ENCODE measurements at regions of chr12 and their contacts with region 1.

Region 1: GRCh38 chr12:118372541-118373495 is at the start of gene TAOK3:
- DNase-seq: peak; percentile 95
- H3K4me3 Mint-ChIP-seq: peak within 1 kb of the TSS; percentile 89
- H3K27ac Mint-ChIP-seq: peak within 1 kb of the TSS; percentile 89
- H3K4me1 Mint-ChIP-seq: peaks cover 44% of the 10 kb centered on the region
- H3K27me3 Mint-ChIP-seq: peaks cover 15% of the 10 kb centered on the region
- total RNA-seq, gene TAOK3: 52.4 and 57.0 TPM in 2 replicates

Region 2: GRCh38 chr12:118016424-118017264 is 356.2 kb before region 1 on chr12 and contains the start of gene RFC5:
- intact Hi-C with region 1: loop called (anchors 2 kb)
- DNase-seq: peak; percentile 95
- H3K4me3 Mint-ChIP-seq: peak within 1 kb of the TSS; percentile 88
- H3K27ac Mint-ChIP-seq: peak within 1 kb of the TSS; percentile 88
- H3K4me1 Mint-ChIP-seq: peaks cover 16% of the 10 kb centered on the region
- H3K27me3 Mint-ChIP-seq: peaks cover 2% of the 10 kb centered on the region
- total RNA-seq, gene RFC5: 61.9 and 65.8 TPM in 2 replicates

Region 3: DNA sequence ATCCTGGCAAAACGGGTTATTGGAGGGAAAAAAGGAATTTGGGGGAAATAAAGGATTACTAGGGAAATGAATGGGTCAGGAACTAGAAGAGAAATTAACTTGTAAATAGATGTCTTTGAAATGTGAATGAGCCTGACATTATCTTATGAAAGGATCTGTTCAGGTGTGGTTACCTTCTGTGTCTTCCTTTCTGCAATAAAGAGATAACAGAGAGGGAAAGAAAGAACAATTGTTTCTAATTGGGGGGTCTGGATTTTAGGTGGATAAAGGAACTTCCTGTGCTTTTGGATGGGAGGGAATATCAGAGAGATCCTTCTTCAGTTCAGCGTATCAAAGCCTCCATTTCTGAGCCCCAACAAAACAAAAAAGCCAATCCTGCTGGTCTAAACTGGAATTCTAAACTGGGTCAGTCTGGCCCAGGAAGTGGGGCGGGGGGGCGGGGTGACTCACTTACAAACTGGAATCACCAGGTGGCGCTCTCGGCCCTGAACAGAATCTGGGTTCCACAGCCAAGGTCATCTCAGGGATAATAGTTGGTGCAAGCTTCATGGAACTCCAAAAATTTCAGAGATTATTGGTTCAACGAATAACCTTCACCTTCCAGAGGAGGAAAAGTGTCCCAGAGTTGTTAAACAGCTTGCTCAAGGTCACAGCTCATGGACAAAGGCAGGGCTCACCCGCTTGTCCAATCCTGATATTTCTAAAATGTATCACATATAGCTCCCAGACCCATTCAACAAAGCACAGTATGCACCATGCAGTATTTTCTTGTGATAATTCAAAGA is 252.0 kb before region 1 on chr12:
- intact Hi-C with region 1: loop called (anchors 1 kb)
- DNase-seq: peak; percentile 36
- H3K4me3 Mint-ChIP-seq: no peak overlapping the region
- H3K27ac Mint-ChIP-seq: peak overlapping the region; percentile 21
- H3K4me1 Mint-ChIP-seq: peaks cover 8% of the 10 kb centered on the region
- H3K27me3 Mint-ChIP-seq: no peaks in the 10 kb centered on the region

Region 4: DNA sequence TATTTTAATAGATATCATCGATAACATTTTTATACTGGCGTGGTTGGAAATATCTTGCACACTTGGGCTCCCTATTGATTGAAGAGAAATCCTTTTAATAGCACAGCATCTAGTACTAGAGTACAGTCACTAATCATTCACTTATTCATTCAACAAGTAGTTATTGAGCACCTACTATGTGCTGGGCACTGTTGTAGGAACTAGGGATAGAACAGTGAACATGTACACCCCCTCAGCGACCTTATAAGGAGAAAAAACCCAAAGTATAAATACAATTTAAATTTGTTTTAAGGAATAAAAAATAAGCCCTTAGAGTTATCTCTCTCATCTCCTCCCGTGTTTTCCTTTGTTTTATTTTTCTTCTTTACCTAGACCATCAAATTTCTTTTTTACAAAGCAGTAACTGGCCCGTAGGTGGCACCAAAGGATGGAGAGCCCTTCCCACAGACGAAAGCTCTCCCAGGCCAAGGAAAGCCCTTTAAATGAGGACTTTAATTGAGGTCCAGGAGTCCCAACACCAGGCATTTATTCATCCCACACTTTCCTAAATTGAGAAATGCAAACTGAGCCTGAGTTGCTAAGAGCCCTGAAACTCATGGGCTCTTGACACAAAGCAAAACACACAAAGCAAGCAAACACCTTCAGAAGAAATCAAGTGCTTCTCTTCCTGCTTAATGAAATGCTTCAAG is 207.9 kb before region 1 on chr12:
- intact Hi-C with region 1: loop called (anchors 1 kb)
- DNase-seq: no peak
- H3K4me3 Mint-ChIP-seq: no peak overlapping the region
- H3K27ac Mint-ChIP-seq: peak overlapping the region; percentile 65
- H3K4me1 Mint-ChIP-seq: peaks cover 21% of the 10 kb centered on the region
- H3K27me3 Mint-ChIP-seq: no peaks in the 10 kb centered on the region

Region 5: DNA sequence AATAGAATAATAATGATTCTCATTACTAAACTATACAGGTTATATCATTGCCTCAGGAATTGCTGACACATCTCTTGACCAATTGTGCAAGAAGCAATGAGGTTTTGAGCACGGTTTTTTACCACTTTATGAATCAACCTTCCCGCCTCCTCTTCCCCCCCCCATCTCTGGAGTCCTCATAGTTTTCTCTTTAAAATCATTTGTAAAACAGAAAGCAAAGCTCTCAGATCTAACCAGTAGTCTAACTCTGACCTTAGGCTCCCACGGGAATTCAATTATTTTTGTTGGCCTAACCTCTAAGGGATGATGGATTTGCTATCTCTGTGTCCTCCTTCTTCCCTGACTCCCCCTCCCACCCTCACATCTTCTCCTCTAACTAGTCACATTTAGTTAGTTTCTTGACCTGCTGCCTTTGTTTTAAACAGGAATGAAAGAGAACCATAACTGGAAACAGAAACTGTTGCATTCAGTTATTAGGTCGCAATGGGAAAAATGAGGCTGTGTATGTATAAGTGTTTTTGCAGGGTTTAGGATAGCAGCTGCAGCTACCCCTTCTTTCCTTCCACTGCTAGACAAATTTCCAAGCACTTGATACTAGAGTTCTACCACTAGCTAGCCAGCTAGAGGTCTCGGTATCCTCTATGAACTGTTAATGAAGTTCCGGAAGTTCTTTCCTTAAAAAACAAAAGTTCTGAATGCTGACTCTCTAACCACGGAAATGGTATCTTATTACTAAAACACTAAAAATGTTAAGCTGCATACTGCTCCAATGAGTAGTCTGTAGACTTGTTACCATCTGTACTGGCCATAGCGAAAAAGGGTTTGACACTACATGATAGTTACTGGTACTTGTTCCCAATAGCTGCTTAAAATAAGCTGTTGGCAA is 65.5 kb before region 1 on chr12:
- intact Hi-C with region 1: loop called (anchors 5 kb)
- DNase-seq: no peak
- H3K4me3 Mint-ChIP-seq: peak overlapping the region; percentile 73
- H3K27ac Mint-ChIP-seq: peak overlapping the region; percentile 72
- H3K4me1 Mint-ChIP-seq: peaks cover 29% of the 10 kb centered on the region
- H3K27me3 Mint-ChIP-seq: no peaks in the 10 kb centered on the region

Region 6: DNA sequence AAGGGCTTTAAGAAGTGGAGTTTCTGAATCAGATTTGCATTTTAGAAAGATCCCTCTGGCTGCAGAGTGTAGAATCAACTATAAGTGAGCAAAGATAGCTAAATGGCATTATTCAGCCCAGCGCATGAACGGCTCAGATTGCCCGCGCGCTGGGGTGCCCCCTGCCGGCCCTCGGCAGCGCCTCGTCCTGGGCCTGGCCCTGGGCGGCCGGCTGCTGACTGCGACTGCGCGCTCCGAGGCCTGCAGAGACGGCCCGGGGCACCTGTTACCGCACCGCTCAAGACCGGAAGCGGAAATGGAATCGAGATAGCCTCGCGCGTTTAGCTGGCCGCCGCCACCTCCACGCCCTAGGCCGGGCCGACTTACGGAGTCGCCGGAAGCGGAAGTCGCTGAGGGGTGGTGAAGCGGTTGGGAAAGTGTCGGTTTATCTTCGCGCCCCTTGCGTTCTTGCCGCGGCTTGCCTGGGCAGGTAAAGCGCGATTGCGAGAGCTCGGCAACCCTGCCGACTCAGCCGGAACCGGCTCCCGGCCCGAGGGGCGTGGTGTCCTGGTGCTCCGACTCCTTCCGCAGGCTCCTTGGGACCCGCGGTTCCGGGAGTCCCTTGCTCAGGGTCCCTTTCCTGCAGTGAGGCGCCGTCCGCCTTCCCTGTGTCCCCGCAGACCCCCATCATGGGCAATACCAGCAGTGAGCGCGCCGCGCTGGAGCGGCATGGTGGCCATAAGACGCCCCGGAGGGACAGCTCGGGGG is 1294.9 kb after region 1 on chr12 and contains the start of gene PRKAB1:
- intact Hi-C with region 1: loop called (anchors 10 kb)
- DNase-seq: peak; percentile 96
- H3K4me3 Mint-ChIP-seq: peak within 1 kb of the TSS; percentile 90
- H3K27ac Mint-ChIP-seq: peak within 1 kb of the TSS; percentile 84
- H3K4me1 Mint-ChIP-seq: peaks cover 49% of the 10 kb centered on the region
- H3K27me3 Mint-ChIP-seq: no peaks in the 10 kb centered on the region
- total RNA-seq, gene PRKAB1: 26.8 and 28.2 TPM in 2 replicates